ENCODE measurements at regions of chr17 and their contacts with region 1.

Region 1: DNA sequence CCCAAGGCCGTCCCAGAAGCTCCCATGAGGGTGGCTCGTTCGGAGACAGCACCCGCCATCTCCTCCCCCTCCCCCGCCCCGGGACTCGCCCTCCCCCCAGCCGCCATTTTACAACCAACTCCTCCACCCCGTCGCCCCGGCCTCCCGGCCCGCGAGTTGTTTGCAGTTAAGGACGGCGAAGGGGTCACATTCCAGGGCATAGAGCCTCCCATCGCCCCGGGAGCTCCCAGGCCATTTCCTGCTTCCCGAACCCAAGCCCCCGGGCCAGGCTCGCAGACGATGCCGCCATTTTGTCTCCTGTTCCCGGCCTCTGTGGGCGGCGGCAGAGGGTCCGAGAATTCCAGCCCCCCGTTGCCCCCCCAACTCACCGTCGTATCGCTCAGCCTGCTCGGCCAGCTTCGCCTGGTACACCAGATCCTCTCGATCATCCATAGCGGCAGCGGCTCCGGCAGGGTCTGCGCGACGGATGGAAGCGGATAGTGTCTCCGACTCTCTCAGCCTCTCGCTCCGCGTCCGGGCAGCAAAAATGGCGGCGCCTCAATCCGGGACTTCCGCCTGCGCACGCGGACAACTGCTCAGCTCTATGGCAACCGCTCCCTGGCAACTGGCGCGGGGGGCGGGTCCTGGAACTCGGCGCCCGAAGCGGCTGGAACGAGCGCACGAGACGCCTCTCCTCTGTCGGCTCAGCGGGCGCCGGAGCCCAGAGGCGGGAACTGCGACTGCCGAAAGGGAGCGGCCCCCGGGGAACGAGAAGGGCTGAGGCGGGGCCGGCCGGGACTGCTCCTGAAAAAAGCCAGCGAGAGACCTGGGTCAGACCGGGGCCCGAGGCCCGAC is at the start of gene YWHAE:
- DNase-seq: peak; percentile 91
- ATAC-seq: peak; percentile 94
- H3K4me3 ChIP-seq: peak within 1 kb of the TSS; percentile 79
- H3K27ac ChIP-seq: peak within 1 kb of the TSS; percentile 98
- H3K4me1 ChIP-seq: no peaks in the 10 kb centered on the region; the same call in none of the 2 replicates
- H3K27me3 ChIP-seq: no peaks in the 10 kb centered on the region
- CTCF ChIP-seq: no peak
- POLR2A ChIP-seq: peak; percentile 95
- RAD21 ChIP-seq: peak; percentile 21; the same call in 1 of the 2 replicates
- total RNA-seq, gene YWHAE: 358 and 964 TPM in 2 replicates

Region 2: DNA sequence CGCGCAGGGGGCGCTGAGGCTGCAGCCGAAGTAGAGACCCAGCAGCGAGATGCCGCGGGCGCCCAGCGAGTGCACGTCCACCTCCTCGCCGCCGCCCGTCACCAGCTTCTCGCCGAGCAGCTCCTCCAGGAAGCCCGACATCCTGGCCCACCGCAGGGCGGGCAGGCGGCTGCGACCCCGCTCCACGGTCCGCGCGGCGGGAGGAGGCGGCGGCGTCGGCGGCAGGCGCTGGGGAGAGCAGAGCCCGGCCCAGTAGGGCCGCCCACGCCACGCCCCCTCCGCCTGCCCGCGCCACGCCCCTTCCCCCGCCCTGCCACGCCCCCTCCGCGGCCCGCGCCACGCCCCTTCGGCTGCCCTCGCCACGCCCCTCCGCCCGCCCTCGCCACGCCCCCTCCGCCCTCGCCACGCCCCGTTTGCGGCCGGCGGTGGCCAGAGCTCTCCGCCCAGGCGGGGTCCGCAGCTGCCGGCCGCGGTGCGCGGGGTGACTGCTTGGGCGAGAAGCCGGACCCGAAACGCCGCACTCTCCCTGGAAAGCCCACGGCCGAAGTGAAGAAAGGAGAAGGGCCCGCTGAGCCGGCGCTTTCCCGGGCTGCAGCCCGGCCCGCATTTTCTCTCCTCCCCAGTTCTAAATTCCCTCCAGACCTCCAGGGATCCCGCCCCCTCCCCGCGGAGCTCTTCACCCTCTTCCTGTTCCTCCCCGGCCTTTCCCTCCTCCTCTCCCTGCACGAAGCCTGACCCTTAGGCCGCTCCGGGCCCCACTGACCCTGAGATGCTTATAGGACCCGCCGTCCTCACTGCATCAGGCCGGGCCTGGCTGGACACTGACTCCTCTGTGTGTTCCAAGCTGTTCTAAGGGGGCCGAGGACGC is 420.1 kb before region 1 on chr17 and contains the start of gene NXN:
- CTCF ChIA-PET with region 1: no interaction called
- POLR2A ChIA-PET with region 1: no interaction called
- dilution Hi-C with region 1: no loop called
- in situ Hi-C with region 1: no loop called
- intact Hi-C with region 1: no loop called
- DNase-seq: peak; percentile 65
- ATAC-seq: peak; percentile 86
- H3K4me3 ChIP-seq: peak within 1 kb of the TSS; percentile 100
- H3K27ac ChIP-seq: peak within 1 kb of the TSS; percentile 91
- H3K4me1 ChIP-seq: peaks cover 12% of the 10 kb centered on the region
- H3K27me3 ChIP-seq: no peaks in the 10 kb centered on the region
- CTCF ChIP-seq: peak; percentile 37
- POLR2A ChIP-seq: no peak
- RAD21 ChIP-seq: peak; percentile 46
- total RNA-seq, gene NXN: 52.5 and 52.8 TPM in 2 replicates

Region 3: GRCh38 chr17:1312261-1312870 is 87.5 kb before region 1 on chr17:
- CTCF ChIA-PET with region 1: no interaction called
- POLR2A ChIA-PET with region 1: no interaction called
- dilution Hi-C with region 1: no loop called
- in situ Hi-C with region 1: no loop called
- intact Hi-C with region 1: no loop called
- DNase-seq: no peak
- ATAC-seq: no peak
- H3K4me3 ChIP-seq: no peak overlapping the region
- H3K27ac ChIP-seq: no peak overlapping the region
- H3K4me1 ChIP-seq: no peaks in the 10 kb centered on the region
- H3K27me3 ChIP-seq: peaks cover 16% of the 10 kb centered on the region
- CTCF ChIP-seq: no peak
- POLR2A ChIP-seq: no peak
- RAD21 ChIP-seq: no peak

Region 4: GRCh38 chr17:1438593-1439083 is 38.7 kb after region 1 on chr17:
- CTCF ChIA-PET with region 1: no interaction called
- POLR2A ChIA-PET with region 1: no interaction called
- dilution Hi-C with region 1: no loop called
- in situ Hi-C with region 1: no loop called
- intact Hi-C with region 1: loop called (anchors 2 kb)
- DNase-seq: peak; percentile 89
- ATAC-seq: peak; percentile 92
- H3K4me3 ChIP-seq: no peak overlapping the region
- H3K27ac ChIP-seq: peak overlapping the region; percentile 85
- H3K4me1 ChIP-seq: peaks cover 16% of the 10 kb centered on the region
- H3K27me3 ChIP-seq: no peaks in the 10 kb centered on the region
- CTCF ChIP-seq: no peak
- POLR2A ChIP-seq: no peak
- RAD21 ChIP-seq: no peak

Region 5: GRCh38 chr17:1455797-1456599 is 56.1 kb after region 1 on chr17 and contains the start of gene CRK:
- CTCF ChIA-PET with region 1: no interaction called
- POLR2A ChIA-PET with region 1: no interaction called
- dilution Hi-C with region 1: no loop called
- in situ Hi-C with region 1: no loop called
- intact Hi-C with region 1: loop called (anchors 5 kb)
- DNase-seq: peak; percentile 93
- ATAC-seq: peak; percentile 94
- H3K4me3 ChIP-seq: peak within 1 kb of the TSS; percentile 75
- H3K27ac ChIP-seq: peak within 1 kb of the TSS; percentile 76
- H3K4me1 ChIP-seq: peaks cover 7% of the 10 kb centered on the region
- H3K27me3 ChIP-seq: no peaks in the 10 kb centered on the region
- CTCF ChIP-seq: peak; percentile 10; the same call in 1 of the 2 replicates
- POLR2A ChIP-seq: peak; percentile 94
- RAD21 ChIP-seq: no peak
- total RNA-seq, gene CRK: 100 and 123 TPM in 2 replicates

Region 6: GRCh38 chr17:1573916-1574696 is 174.2 kb after region 1 on chr17:
- CTCF ChIA-PET with region 1: no interaction called
- POLR2A ChIA-PET with region 1: no interaction called
- dilution Hi-C with region 1: no loop called
- in situ Hi-C with region 1: no loop called
- intact Hi-C with region 1: no loop called
- DNase-seq: peak; percentile 66
- ATAC-seq: peak; percentile 58
- H3K4me3 ChIP-seq: no peak overlapping the region
- H3K27ac ChIP-seq: no peak overlapping the region; the same call in 1 of the 2 replicates
- H3K4me1 ChIP-seq: peaks cover 15% of the 10 kb centered on the region
- H3K27me3 ChIP-seq: no peaks in the 10 kb centered on the region
- CTCF ChIP-seq: peak; percentile 96
- POLR2A ChIP-seq: no peak
- RAD21 ChIP-seq: peak; percentile 91

Measured in IMR-90 (cell line).